Activated naive CD4-positive, alpha-beta T cell treated with anti-CD3 and anti-CD28 coated beads, Interleukin-2, amount 10 ng/mL, durations not matched to agents 7 days and 5 days (primary cell): ENCODE measurements at regions of chr21 and their contacts with region 1.

Region 1: GRCh38 chr21:46639489-46640386 is 4.3 kb downstream of the PRMT2 start:
- DNase-seq: no peak
- H3K4me3 Mint-ChIP-seq: peak overlapping the region; percentile 51
- H3K27ac Mint-ChIP-seq: peak overlapping the region; percentile 43
- H3K4me1 Mint-ChIP-seq: peaks cover 50% of the 10 kb centered on the region
- H3K27me3 Mint-ChIP-seq: no peaks in the 10 kb centered on the region

Region 2: GRCh38 chr21:46559291-46559983 is 80.3 kb before region 1 on chr21:
- CTCF ChIA-PET with region 1: interaction called, 14 read pairs
- DNase-seq: peak; percentile 77
- H3K4me3 Mint-ChIP-seq: peak overlapping the region; percentile 61
- H3K27ac Mint-ChIP-seq: peak overlapping the region; percentile 99
- H3K4me1 Mint-ChIP-seq: peaks cover 69% of the 10 kb centered on the region
- H3K27me3 Mint-ChIP-seq: no peaks in the 10 kb centered on the region